Activated T-helper 1 cell treated with anti-CD3 and anti-CD28 coated beads, Interleukin-12 subunit alpha, Interleukin-12 subunit beta, Interleukin-2, Interleukin-4 antibody, amounts not matched to agents 30 ng/mL and 10 ng/mL and 1 ng/mL, durations not matched to agents 14 hours and 24 hours and 36 hours (primary cell): ENCODE measurements at regions of chr2 and their contacts with region 1.

Region 1: DNA sequence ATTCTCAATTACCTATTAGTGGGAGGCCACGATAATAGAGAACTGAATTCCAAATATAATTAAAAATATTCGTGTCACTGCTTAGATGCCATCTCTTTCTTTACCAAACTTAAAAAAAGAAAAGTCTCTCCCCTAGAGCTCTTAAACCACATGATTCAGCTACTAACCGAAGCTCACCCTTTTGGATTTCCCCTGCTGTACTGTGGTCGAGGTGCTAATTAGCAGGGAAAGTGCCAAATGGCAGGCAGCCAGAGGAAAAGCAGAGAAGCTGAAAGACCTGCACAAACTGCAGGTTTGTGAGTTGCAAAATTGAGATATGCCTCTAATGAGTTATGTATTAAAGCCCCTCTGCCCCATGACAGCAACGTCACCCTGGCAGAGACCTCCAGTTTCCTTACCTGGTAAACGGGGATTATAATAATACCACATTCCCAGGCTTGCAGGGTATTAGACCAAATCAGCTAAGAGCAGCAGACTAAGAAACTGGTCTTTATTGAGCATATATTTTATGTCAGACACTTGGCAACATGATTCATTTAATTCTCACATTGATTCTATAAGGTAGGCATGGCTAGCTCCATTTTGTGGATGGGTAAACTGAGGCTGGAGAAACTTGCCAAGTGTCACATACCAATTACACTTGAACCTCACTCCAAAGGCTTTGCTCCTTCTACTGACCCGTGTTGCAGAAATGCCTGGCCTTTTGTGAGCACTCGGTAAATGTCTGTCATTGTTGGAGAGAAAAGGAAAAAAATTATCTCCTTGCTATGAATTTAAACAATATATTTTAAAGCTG is 259.7 kb downstream of the LPIN1 start:
- DNase-seq: peak; percentile 45
- H3K4me3 Mint-ChIP-seq: no peak overlapping the region
- H3K27ac Mint-ChIP-seq: no peak overlapping the region
- H3K4me1 Mint-ChIP-seq: peaks cover 7% of the 10 kb centered on the region
- H3K27me3 Mint-ChIP-seq: peaks cover 58% of the 10 kb centered on the region

Region 2: GRCh38 chr2:11863513-11864328 is 142.4 kb before region 1 on chr2:
- intact Hi-C with region 1: loop called (anchors 10 kb)
- DNase-seq: peak; percentile 22
- H3K4me3 Mint-ChIP-seq: no peak overlapping the region
- H3K27ac Mint-ChIP-seq: no peak overlapping the region
- H3K4me1 Mint-ChIP-seq: peaks cover 9% of the 10 kb centered on the region
- H3K27me3 Mint-ChIP-seq: peaks cover 19% of the 10 kb centered on the region

Region 3: DNA sequence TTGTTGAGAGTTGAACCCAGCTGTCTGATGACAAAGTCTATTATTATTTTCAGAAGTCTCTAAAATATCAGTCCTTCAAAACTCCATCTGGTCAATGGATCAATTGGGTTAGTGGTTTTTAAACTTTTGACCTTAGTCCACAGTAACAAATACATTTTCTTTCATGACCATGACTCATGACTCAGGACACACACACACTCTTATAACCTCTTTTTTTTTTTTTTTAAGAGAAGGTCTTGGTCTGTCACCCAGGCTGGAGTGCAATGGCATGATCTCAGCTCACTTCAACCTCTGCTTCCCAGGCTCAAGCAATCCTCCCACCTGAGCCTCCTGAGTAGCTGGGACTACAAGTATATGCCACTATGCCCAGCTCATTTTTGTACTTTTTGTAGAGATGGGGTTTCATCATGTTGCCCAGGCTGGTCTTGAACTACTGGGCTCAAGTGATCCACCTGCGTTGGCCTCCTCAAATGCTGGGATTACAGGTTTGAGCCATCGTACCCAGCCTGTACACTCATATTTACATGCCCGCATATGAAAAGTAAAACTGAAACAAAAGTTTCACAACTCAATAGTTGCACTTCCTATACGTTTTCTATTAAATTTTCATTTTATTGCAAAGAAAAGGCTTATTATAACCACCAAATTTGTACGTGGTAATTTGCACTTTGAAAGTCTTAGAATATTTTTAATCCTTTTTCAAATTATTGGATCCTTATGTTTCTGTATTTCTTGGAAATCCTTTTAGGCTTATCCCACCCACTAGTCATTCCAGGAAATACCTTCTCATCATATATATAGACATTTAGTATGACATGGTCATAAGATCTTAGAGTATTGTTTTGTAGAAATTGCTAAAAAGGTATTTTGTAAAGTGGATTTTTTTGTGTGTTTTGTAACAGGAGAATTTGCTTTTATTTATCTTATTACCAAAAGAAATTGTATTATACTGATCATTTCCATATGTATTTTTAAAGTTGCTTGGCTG is 60.7 kb before region 1 on chr2:
- intact Hi-C with region 1: loop called (anchors 5 kb)
- DNase-seq: peak; percentile 1
- H3K4me3 Mint-ChIP-seq: peak overlapping the region; percentile 24
- H3K27ac Mint-ChIP-seq: no peak overlapping the region
- H3K4me1 Mint-ChIP-seq: peaks cover 16% of the 10 kb centered on the region
- H3K27me3 Mint-ChIP-seq: peaks cover 2% of the 10 kb centered on the region

Region 4: GRCh38 chr2:12430407-12431133 is 424.5 kb after region 1 on chr2:
- intact Hi-C with region 1: loop called (anchors 1 kb)
- DNase-seq: peak; percentile 8
- H3K4me3 Mint-ChIP-seq: peak overlapping the region; percentile 58
- H3K27ac Mint-ChIP-seq: peak overlapping the region; percentile 74
- H3K4me1 Mint-ChIP-seq: peaks cover 55% of the 10 kb centered on the region
- H3K27me3 Mint-ChIP-seq: no peaks in the 10 kb centered on the region